Activated naive CD4-positive, alpha-beta T cell treated with anti-CD3 and anti-CD28 coated beads for 36 hours (primary cell): ENCODE measurements at regions of chr9 and their contacts with region 1.

Region 1: GRCh38 chr9:4750023-4750673 is 9.1 kb upstream of the AK3 start:
- DNase-seq: no peak
- H3K4me3 Mint-ChIP-seq: no peak overlapping the region
- H3K27ac Mint-ChIP-seq: no peak overlapping the region
- H3K4me1 Mint-ChIP-seq: peaks cover 34% of the 10 kb centered on the region
- H3K27me3 Mint-ChIP-seq: no peaks in the 10 kb centered on the region

Region 2: DNA sequence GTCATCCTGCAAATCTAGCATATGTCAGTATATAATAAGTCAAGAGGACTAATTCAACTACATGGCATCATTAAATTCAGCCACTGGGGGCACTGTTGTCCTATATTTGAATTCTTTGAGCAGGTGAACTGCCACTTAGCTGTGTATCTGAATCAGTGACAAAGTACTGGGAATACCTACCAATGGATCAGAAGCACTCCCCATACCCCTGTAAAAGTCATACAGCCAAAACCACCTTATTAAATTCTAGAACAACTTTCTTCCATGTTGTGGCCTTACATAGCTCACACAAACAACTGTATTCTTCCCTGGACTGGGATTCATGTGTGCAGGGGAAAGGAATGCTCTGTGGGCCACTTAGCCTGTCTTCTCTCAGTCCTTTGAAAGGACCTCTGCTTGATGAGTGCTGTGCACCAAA is 145.5 kb before region 1 on chr9:
- CTCF ChIA-PET with region 1: interaction called, 5 read pairs
- intact Hi-C with region 1: loop called (anchors 2 kb)
- DNase-seq: peak; percentile 88
- H3K4me3 Mint-ChIP-seq: no peak overlapping the region
- H3K27ac Mint-ChIP-seq: no peak overlapping the region
- H3K4me1 Mint-ChIP-seq: peaks cover 19% of the 10 kb centered on the region
- H3K27me3 Mint-ChIP-seq: no peaks in the 10 kb centered on the region

Region 3: GRCh38 chr9:4667681-4668080 is 82.5 kb before region 1 on chr9:
- CTCF ChIA-PET with region 1: no interaction called
- intact Hi-C with region 1: loop called (anchors 1 kb)
- DNase-seq: no peak
- H3K4me3 Mint-ChIP-seq: no peak overlapping the region
- H3K27ac Mint-ChIP-seq: no peak overlapping the region
- H3K4me1 Mint-ChIP-seq: peaks cover 76% of the 10 kb centered on the region
- H3K27me3 Mint-ChIP-seq: no peaks in the 10 kb centered on the region